A549 (cell line): ENCODE measurements at regions of chr2 and their contacts with region 1.

Region 1: GRCh38 chr2:47323009-47323821 is 79.7 kb upstream of the MSH2 start:
- DNase-seq: peak; percentile 81 to 92
- ATAC-seq: peak; percentile 89 to 93
- H3K4me3 ChIP-seq: no peak overlapping the region
- H3K27ac ChIP-seq: peak overlapping the region; percentile 48 to 77
- H3K4me1 ChIP-seq: peaks cover 44% of the 10 kb centered on the region
- CTCF ChIP-seq: peak; percentile 97
- EP300 ChIP-seq: no peak
- POLR2A ChIP-seq: no peak
- RAD21 ChIP-seq: peak; percentile 99 to 100

Region 2: GRCh38 chr2:46915811-46916630 is 407.2 kb before region 1 on chr2:
- CTCF ChIA-PET with region 1: interaction called, 25 read pairs
- POLR2A ChIA-PET with region 1: interaction called, 4 read pairs
- DNase-seq: peak; percentile 88 to 92
- ATAC-seq: peak; percentile 92
- H3K4me3 ChIP-seq: peak overlapping the region; percentile 80
- H3K27ac ChIP-seq: peak overlapping the region; percentile 94 to 96
- H3K4me1 ChIP-seq: peaks cover 33% of the 10 kb centered on the region
- CTCF ChIP-seq: no peak
- EP300 ChIP-seq: no peak
- POLR2A ChIP-seq: peak; percentile 69
- RAD21 ChIP-seq: no peak; a peak in 1 of 5 replicates

Region 3: GRCh38 chr2:46964835-46965560 is 358.2 kb before region 1 on chr2:
- CTCF ChIA-PET with region 1: interaction called, 16 read pairs
- POLR2A ChIA-PET with region 1: no interaction called
- DNase-seq: peak in 1 of 2 experiments; percentile 48
- ATAC-seq: peak in 1 of 2 experiments; percentile 7; a peak in 3 of 6 replicates
- H3K4me3 ChIP-seq: no peak overlapping the region
- H3K27ac ChIP-seq: peak overlapping the region; percentile 93 to 97
- H3K4me1 ChIP-seq: peaks cover 74% of the 10 kb centered on the region
- CTCF ChIP-seq: no peak
- EP300 ChIP-seq: peak in 1 of 2 experiments; percentile 29; a peak in 1 of 5 replicates
- POLR2A ChIP-seq: no peak
- RAD21 ChIP-seq: no peak

Region 4: DNA sequence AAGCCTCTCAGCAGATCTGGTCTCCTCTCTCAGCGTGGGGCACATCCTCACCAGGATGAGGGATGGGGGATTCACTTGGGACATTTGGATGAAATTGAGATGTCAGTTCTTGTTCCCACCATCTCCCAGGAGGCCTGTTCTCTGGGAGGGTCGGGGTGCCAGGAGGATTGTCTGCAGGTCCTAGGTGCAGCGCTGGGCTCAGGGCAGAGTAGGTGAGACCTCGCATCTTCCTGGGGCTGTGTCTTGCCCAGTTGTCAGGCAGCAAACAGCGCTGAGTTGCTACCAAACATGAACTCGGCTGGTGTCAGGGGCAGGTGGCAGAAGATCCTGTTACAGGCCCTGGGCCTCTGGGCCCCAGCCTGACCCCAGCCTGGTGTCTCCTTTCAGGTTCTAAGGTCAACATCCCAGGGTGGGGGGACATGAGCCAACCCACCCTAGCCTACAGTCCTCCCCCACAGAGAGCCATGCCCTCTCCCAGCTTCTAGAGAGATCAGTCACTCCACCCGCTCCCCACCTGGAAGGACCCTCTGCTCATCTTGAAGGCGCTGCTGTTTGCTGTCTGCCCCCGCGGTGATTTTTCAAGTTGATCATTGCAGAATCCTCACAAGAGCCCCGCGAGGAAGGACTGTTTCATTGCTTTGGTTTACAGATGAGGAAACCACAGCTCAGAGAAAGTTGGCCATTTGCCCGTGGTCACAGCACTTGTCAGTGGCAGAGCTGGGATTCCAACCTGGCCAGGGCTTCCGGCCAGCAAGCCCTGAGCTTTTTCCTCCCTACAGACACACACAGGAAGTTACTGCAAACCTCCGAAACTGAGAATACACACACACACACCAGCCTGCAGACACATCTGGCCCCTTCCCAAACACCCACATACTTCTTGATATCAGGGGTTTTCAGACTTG is 252.0 kb before region 1 on chr2:
- CTCF ChIA-PET with region 1: interaction called, 15 read pairs
- POLR2A ChIA-PET with region 1: interaction called, 5 read pairs
- DNase-seq: peak in 1 of 2 experiments; percentile 52
- ATAC-seq: peak in 1 of 2 experiments; percentile 1; a peak in 1 of 6 replicates
- H3K4me3 ChIP-seq: no peak overlapping the region
- H3K27ac ChIP-seq: peak overlapping the region; percentile 85 to 90
- H3K4me1 ChIP-seq: peaks cover 76% of the 10 kb centered on the region
- CTCF ChIP-seq: no peak
- EP300 ChIP-seq: no peak
- POLR2A ChIP-seq: no peak
- RAD21 ChIP-seq: no peak

Region 5: GRCh38 chr2:47237822-47238385 is 85.3 kb before region 1 on chr2:
- CTCF ChIA-PET with region 1: interaction called, 10 read pairs
- POLR2A ChIA-PET with region 1: no interaction called
- DNase-seq: no peak
- ATAC-seq: no peak
- H3K4me3 ChIP-seq: no peak overlapping the region
- H3K27ac ChIP-seq: peak overlapping the region in 1 of 2 experiments; percentile 13; a peak in 1 of 6 replicates
- H3K4me1 ChIP-seq: peaks cover 14% of the 10 kb centered on the region
- CTCF ChIP-seq: no peak
- EP300 ChIP-seq: no peak
- POLR2A ChIP-seq: no peak
- RAD21 ChIP-seq: no peak

Region 6: DNA sequence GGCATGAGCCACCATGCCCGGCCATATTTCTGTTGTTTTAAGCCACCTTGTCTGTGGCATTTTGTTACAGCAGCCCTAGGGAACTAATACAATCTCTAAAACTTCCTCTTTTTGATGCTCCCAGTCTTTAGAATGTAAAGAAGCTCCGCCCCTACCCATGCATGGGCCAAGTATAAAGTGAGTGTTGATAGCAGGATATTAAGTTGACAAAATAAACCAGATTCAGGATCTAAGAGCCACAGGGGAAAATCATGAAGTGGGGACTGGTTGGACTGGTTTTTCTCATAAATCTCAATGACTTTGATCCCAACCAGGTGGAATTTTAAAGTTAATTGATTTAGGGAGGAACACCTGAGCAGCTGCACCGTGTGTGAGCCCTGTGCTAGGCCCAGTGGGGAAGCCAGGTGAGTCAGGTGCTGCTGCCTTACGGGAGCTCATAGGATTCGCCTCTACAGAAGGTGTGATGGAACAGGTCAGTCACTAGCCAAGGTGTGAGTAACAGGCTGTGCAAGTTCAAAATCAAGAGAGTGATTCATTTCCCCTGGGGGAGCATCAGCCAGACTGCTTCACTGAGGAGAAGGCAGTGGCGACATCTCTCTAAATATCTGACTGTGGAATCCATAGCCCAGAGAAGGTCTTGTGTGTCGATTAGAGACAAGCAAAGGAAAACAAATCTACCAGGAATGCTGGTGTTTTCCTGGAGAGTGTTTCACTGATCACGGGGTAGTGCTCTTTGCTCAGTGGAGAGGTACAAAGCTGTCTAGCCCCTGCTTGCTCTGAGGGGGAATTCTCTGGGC is 16.7 kb after region 1 on chr2:
- CTCF ChIA-PET with region 1: interaction called, 121 read pairs
- POLR2A ChIA-PET with region 1: no interaction called
- DNase-seq: peak in 1 of 2 experiments; percentile 59
- ATAC-seq: peak; percentile 15 to 54; a peak in 5 of 6 replicates
- H3K4me3 ChIP-seq: no peak overlapping the region
- H3K27ac ChIP-seq: peak overlapping the region; percentile 12 to 74; a peak in 4 of 6 replicates
- H3K4me1 ChIP-seq: peaks cover 27% of the 10 kb centered on the region
- CTCF ChIP-seq: no peak
- EP300 ChIP-seq: no peak
- POLR2A ChIP-seq: no peak
- RAD21 ChIP-seq: no peak

Region 7: GRCh38 chr2:47357483-47357882 is 34.3 kb after region 1 on chr2:
- CTCF ChIA-PET with region 1: no interaction called
- POLR2A ChIA-PET with region 1: no interaction called
- DNase-seq: peak in 1 of 2 experiments; percentile 56
- ATAC-seq: no peak
- H3K4me3 ChIP-seq: no peak overlapping the region
- H3K27ac ChIP-seq: peak overlapping the region; percentile 5 to 65; a peak in 4 of 6 replicates
- H3K4me1 ChIP-seq: peaks cover 57% of the 10 kb centered on the region
- CTCF ChIP-seq: no peak
- EP300 ChIP-seq: no peak
- POLR2A ChIP-seq: no peak
- RAD21 ChIP-seq: no peak